CD4-positive, alpha-beta T cell (primary cell): ENCODE measurements at regions of chr20 and their contacts with region 1.

Region 1: DNA sequence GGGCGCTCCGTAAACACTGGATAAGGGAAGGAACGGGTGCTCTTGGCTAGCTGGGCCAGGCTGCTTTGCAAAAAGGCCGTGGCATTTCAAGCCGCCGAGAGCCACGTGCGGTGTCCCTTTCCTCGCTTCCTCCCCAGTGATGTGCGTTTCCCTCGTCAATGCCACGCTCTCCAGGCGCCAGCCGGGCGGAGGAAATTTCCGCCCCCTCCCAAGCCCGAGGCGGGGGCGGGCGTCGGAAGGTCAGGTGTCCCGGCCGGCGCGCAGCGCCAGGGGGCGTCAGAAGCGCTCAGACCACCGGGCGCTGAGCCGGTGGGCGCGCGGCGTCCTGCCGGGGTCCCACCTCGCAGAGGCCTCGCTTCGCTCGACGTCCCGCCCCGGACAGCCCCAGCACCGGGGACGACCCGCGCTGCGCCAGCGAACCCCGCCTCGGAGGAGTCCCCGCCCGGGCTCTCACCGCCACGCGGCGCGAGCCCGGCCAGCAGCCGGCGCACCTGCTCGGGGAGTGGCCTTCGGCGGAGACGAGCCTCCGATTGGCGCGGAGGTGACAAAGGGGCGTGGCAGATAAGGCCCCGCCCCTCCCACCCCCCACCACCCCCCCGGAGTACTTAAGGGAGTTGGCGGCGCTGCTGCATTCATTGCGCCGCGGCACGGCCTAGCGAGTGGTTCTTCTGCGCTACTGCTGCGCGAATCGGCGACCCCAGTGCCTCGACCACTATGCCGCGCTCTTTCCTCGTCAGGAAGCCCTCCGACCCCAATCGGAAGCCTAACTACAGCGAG is at the start of gene SNAI1:
- DNase-seq: peak; percentile 68 to 94 (median 82)
- ATAC-seq: peak; percentile 91
- H3K4me3 ChIP-seq: peak within 1 kb of the TSS; percentile 48
- H3K4me3 Mint-ChIP-seq: peak within 1 kb of the TSS; percentile 72
- H3K27ac ChIP-seq: no peak within 1 kb of the TSS
- H3K27ac Mint-ChIP-seq: peak within 1 kb of the TSS; percentile 74
- H3K4me1 ChIP-seq: peaks cover 24% of the 10 kb centered on the region
- H3K4me1 Mint-ChIP-seq: peaks cover 15% of the 10 kb centered on the region
- H3K27me3 ChIP-seq: no peaks in the 10 kb centered on the region
- H3K27me3 Mint-ChIP-seq: no peaks in the 10 kb centered on the region
- CTCF ChIP-seq: peak; percentile 28
- total RNA-seq, gene SNAI1: 1.7 to 2.5 TPM

Region 2: DNA sequence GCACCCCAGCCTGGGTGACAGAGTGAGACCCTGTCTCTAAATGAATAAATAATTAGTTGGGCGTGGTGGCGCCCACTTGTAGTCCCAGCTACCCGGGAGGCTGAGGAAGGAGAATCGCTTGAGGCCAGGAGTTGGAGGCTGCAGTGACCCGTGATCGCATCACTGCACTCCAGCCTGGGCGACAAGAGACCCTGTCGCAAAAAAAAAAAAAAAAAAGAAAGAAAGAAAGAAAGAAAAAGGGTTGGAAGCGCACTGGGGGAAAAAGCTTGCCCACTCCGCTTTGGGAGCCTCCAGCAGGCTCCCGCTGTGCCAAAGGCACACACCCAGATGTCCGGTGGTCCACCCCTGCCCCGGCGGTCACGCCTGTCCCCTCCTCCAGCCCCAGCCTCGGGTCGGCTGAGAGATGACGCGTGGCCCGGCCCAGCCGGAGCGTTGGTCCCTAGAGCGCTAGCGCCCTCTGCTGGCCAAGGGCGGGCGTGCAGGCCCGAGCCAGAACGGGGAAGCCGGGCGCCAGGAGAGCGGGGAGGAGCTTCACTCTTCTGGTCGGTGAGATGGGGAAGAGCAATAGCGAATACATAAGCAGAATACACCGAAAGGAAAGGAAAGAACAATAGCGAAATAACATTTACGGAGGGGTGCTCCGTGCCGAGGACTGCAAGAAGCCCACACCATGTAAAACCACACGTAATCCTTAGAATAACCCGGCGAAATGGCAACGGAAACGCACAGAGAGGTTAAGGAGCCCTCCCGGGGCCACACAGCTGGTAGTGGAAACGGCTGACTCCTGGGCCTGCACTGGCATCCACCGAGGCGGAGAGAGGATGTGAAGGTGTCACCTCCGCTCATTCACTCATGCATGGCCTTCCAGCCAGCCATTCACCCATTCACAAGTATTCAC is 88.7 kb after region 1 on chr20:
- CTCF ChIA-PET with region 1: interaction called, 102 read pairs
- POLR2A ChIA-PET with region 1: interaction called, 17 read pairs
- intact Hi-C with region 1: loop called (anchors 1 kb)
- DNase-seq: peak; percentile 71 to 98 (median 91)
- ATAC-seq: peak; percentile 100
- H3K4me3 ChIP-seq: peak overlapping the region; percentile 38
- H3K4me3 Mint-ChIP-seq: peak overlapping the region; percentile 60
- H3K27ac ChIP-seq: no peak overlapping the region
- H3K27ac Mint-ChIP-seq: no peak overlapping the region
- H3K4me1 ChIP-seq: peaks cover 14% of the 10 kb centered on the region
- H3K4me1 Mint-ChIP-seq: peaks cover 5% of the 10 kb centered on the region
- H3K27me3 ChIP-seq: no peaks in the 10 kb centered on the region
- H3K27me3 Mint-ChIP-seq: no peaks in the 10 kb centered on the region
- CTCF ChIP-seq: peak; percentile 99

Region 3: DNA sequence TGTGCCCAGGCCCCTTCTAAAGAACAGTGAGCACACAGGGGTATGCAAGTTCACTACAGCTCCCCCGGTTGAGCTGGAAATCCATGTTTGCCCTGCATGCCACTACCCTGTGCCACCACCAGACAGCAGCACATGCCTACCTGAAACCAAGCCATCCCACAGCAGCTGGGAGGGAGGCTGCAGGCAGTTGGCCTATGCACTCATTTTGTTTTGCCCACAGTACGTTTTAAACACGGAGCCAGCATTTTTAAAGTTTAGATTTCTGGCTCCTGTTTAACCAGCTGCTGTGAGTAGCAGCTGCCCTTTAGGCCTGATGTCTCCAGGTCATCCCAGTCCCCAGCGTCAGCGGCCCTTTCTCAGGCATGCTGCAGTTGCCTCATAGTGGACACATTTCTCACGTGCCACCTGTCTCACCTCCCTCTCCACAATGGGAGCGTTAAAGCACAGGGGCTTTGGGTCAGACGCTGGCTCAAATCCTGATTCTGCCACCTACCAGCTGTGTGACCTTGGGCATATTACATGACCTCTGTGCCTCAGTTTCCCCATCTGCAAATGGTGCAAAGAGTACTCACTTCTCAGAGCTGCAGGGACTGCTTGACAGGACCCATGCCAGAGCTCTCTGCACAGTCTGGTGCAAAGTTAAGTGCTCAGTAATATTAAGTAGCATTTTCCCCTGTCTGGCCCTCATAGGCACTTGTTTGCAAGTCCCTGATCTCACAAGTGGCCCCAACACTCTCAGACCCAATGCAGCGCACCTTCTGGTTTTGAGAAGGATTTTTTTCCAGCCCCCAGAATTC is 138.6 kb after region 1 on chr20:
- CTCF ChIA-PET with region 1: interaction called, 10 read pairs
- POLR2A ChIA-PET with region 1: no interaction called
- intact Hi-C with region 1: no loop called
- DNase-seq: peak; percentile 48 to 85 (median 62)
- ATAC-seq: peak; percentile 83
- H3K4me3 ChIP-seq: no peak overlapping the region
- H3K4me3 Mint-ChIP-seq: no peak overlapping the region
- H3K27ac ChIP-seq: no peak overlapping the region
- H3K27ac Mint-ChIP-seq: peak overlapping the region; percentile 17
- H3K4me1 ChIP-seq: peaks cover 9% of the 10 kb centered on the region
- H3K4me1 Mint-ChIP-seq: peaks cover 12% of the 10 kb centered on the region
- H3K27me3 ChIP-seq: no peaks in the 10 kb centered on the region
- H3K27me3 Mint-ChIP-seq: no peaks in the 10 kb centered on the region
- CTCF ChIP-seq: peak; percentile 74

Region 4: DNA sequence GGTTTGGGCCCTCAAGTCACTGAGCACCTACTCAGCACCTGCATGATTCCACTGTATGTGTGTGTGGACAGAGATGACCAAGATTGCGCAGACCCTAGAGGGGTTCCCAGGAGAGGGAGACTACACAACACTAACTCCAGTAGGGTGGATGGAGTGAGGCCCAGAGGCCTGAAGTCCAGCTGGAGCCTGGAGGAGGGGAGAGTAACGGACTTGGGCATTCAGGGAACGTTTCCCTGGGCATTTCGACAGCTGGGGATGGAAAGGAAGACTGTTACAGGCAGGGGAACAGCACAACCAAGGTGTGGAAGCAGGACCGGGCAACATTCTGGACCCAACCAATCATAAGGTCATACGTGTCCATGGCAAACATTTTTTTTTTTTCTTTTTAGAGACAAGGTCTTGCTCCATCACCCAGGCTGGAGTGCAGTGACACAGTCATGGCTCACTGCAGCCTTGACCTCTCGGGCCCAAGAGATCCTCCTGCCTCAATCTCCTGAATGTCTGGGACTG is 197.0 kb after region 1 on chr20:
- CTCF ChIA-PET with region 1: interaction called, 6 read pairs
- POLR2A ChIA-PET with region 1: no interaction called
- intact Hi-C with region 1: loop called (anchors 2 kb)
- DNase-seq: no peak
- ATAC-seq: no peak
- H3K4me3 ChIP-seq: no peak overlapping the region
- H3K4me3 Mint-ChIP-seq: no peak overlapping the region
- H3K27ac ChIP-seq: no peak overlapping the region
- H3K27ac Mint-ChIP-seq: no peak overlapping the region
- H3K4me1 ChIP-seq: no peaks in the 10 kb centered on the region
- H3K4me1 Mint-ChIP-seq: no peaks in the 10 kb centered on the region
- H3K27me3 ChIP-seq: peaks cover 0 to 3% of the 10 kb centered on the region in 2 experiments
- H3K27me3 Mint-ChIP-seq: peaks cover 4% of the 10 kb centered on the region
- CTCF ChIP-seq: peak; percentile 39

Region 5: GRCh38 chr20:50478162-50479036 is 495.9 kb after region 1 on chr20:
- CTCF ChIA-PET with region 1: no interaction called
- POLR2A ChIA-PET with region 1: no interaction called
- intact Hi-C with region 1: loop called in 1 of 2 experiments (anchors 10 kb)
- DNase-seq: peak; percentile 61 to 88 (median 70)
- ATAC-seq: peak; percentile 100
- H3K4me3 ChIP-seq: no peak overlapping the region
- H3K4me3 Mint-ChIP-seq: no peak overlapping the region
- H3K27ac ChIP-seq: no peak overlapping the region
- H3K27ac Mint-ChIP-seq: no peak overlapping the region
- H3K4me1 ChIP-seq: peaks cover 18% of the 10 kb centered on the region
- H3K4me1 Mint-ChIP-seq: peaks cover 21% of the 10 kb centered on the region
- H3K27me3 ChIP-seq: no peaks in the 10 kb centered on the region
- H3K27me3 Mint-ChIP-seq: no peaks in the 10 kb centered on the region
- CTCF ChIP-seq: peak; percentile 82